Dendritic cell treated with granulocyte-macrophage colony-stimulating factor and Interleukin-4, amounts not matched to agents 40 ng/mL and 50 ng/mL, for 4 days (primary cell): ENCODE measurements at regions of chr10 and their contacts with region 1.

Region 1: DNA sequence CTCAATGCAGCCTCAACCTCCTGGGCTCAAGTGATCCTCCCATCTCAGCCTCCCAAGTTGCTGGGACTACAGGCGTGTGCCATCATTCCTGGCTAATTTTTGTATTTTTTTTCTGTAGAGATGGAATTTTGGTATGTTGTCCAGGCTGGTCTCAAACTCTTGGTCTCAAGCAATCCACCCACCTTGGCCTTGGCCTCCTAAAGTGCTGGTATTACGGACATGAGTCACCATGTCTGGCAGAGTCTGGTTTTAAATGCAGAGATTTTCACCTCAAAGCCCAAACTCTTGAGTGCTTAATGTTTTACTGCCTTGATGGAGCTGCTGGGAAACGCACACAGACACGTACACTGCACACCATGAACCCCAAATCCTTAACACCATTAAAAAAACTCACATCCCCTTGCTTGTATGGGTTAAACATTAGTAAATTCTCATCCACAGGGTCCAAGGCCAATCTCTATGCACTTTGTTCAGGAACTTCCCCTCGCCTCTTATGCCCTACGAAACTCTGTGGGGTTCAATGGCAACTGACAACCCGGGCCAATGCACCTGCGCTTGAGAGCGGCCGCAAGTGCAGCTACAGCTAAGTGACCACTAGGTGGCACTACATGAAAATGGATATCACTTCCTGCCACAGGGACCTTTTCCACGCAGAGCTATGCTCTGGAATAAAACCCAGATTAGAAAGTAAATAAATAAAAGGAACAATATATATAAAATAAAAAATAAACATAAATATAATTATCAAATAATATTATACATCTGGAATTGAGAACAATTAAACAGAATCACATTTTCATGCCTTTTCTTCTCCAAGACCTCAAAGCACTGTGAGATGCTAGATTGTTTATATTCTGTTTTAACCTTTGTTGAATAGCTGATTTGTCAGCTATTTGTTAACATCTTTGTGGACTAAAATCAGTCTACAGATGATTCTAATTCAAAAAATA is 66.9 kb upstream of the AFAP1L2 start:
- H3K4me3 Mint-ChIP-seq: no peak overlapping the region
- H3K27ac Mint-ChIP-seq: no peak overlapping the region
- H3K4me1 Mint-ChIP-seq: no peaks in the 10 kb centered on the region
- H3K27me3 Mint-ChIP-seq: peaks cover 2% of the 10 kb centered on the region

Region 2: DNA sequence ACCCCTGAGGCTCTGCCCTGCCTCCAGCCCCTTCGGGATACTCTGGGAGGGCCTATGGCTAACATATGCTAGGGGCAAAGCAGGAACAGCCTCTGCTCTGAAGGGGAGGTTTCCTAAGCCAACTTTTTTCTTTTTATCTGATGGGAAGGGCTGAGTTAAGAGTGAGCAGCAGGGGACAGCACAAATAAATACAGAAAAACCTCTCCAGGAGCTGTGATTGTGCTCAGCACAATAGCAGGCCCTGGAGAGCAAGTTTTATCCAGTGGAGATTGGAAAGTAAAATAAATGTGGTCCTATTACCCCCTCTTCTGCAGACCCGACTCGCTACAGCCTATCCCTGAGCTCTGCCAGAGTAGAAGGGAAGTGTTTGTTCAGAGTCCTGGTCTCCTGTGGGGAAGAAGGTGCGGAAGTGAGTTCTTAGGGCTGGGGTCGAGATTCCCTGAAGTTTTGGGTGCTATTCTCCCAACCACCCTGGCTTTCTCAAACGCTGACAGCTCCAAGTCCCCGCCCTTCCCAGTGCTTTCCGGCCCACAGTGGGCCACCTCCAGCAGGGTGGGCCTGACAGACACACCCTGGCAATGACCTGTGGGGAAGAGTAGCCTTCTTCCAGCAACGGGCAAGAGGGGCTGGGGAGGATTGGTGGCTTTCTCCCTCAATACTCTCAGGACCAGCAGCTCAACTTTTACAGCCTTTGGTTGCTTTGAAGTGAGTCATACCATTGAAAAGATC is 43.9 kb before region 1 on chr10:
- intact Hi-C with region 1: no loop called
- H3K4me3 Mint-ChIP-seq: no peak overlapping the region
- H3K27ac Mint-ChIP-seq: no peak overlapping the region
- H3K4me1 Mint-ChIP-seq: no peaks in the 10 kb centered on the region
- H3K27me3 Mint-ChIP-seq: peaks cover 1% of the 10 kb centered on the region

Region 3: DNA sequence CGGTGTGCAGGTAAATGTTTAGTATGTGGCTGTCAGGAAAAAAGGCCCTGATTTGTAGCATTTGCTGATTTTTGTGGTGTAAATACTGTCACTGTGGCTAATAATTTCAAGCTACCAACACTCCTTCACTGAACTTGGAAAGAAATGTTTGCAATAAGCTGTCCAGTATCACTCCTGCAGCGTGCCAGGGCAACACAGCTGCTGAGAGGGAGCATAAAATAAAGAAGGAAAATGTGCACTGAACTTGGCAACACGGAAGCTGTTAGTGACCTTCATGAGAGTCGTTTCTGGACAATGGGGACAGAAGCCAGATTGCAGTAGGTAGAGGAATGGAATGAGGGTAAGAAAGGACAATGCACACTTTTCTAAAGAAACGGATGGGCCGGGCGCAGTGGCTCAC is 312.5 kb after region 1 on chr10:
- intact Hi-C with region 1: loop called (anchors 1 kb)
- H3K4me3 Mint-ChIP-seq: no peak overlapping the region
- H3K27ac Mint-ChIP-seq: no peak overlapping the region
- H3K4me1 Mint-ChIP-seq: peaks cover 10% of the 10 kb centered on the region
- H3K27me3 Mint-ChIP-seq: no peaks in the 10 kb centered on the region

Region 4: GRCh38 chr10:114876602-114877300 is 405.5 kb after region 1 on chr10:
- intact Hi-C with region 1: loop called (anchors 5 kb)
- H3K4me3 Mint-ChIP-seq: no peak overlapping the region
- H3K27ac Mint-ChIP-seq: no peak overlapping the region
- H3K4me1 Mint-ChIP-seq: peaks cover 46% of the 10 kb centered on the region
- H3K27me3 Mint-ChIP-seq: peaks cover 13% of the 10 kb centered on the region

Region 5: DNA sequence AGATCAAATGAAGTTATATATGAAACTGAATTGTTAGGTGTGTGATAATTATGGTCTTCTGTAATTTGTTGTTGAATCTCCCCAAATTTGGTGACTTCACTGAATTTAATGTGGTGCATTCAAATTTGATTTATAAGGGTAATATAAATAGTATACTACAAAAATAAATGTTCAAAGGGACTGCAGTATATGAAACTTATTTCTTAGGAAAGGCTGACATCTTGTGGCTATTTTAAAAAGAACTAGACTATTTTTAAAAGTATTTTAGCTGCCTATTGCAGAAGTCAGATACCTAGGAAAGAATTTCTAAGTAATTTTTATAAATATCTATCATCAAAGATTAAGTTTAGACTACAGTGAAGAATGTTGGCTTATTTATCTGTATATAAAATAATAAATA is 658.5 kb after region 1 on chr10:
- intact Hi-C with region 1: loop called (anchors 5 kb)
- H3K4me3 Mint-ChIP-seq: no peak overlapping the region
- H3K27ac Mint-ChIP-seq: no peak overlapping the region
- H3K4me1 Mint-ChIP-seq: no peaks in the 10 kb centered on the region
- H3K27me3 Mint-ChIP-seq: no peaks in the 10 kb centered on the region